Naive thymus-derived CD8-positive, alpha-beta T cell (primary cell): ENCODE measurements at regions of chr15 and their contacts with region 1.

Region 1: DNA sequence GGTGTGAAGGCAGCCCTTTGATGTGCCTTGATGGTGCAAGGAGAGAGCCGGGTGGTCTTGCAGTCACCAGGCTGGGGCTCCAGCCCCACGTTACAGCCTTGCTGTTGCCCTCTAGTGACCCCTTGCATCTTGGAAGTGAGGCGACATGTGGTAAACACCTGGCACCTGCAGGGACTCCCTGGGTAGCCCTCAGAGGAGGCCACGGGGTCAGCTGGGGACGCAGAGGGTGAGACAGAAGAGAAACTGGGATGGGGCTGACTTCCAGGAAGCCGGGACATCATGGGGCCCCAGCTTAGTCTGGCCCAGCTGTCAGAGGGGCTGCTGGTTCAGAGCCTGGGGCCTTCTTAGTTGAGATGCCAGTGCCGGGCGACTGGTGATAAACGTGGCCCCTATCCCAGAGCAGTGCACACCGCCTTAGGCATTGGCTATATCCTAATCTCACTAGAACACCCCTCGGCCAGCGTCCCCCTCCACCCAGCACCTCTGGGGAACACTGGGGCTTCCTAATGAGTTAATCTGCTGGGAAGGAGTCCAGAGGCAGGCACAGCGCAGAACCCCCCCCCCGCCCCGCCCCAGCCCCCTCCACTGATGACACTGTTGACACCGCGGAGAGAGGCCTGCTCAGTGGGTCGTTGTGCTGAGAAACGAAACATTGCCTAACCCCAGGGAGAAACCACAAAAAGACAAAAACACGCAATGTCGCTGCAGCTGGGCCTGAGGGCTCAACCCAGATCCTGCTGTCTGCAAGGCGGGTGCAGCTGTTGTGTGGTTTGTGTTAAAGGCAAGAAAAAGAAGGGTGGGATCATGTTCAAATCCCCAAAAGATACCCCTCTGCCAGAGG is 60.5 kb upstream of the KLF13 start:
- DNase-seq: peak; percentile 22 to 89 (median 74)
- ATAC-seq: peak; percentile 80 to 89
- H3K4me3 Mint-ChIP-seq: peak overlapping the region; percentile 62 to 85 (median 80)
- H3K27ac Mint-ChIP-seq: peak overlapping the region; percentile 93 to 100 (median 97)
- H3K4me1 Mint-ChIP-seq: peaks cover 56 to 98% (median 95%) of the 10 kb centered on the region in 4 donors
- H3K27me3 Mint-ChIP-seq: no peaks in the 10 kb centered on the region

Region 2: GRCh38 chr15:31215490-31216214 is 50.4 kb before region 1 on chr15:
- POLR2A ChIA-PET with region 1: interaction called, 59 read pairs
- DNase-seq: peak; percentile 52 to 84 (median 73)
- ATAC-seq: peak; percentile 72 to 78
- H3K4me3 Mint-ChIP-seq: peak overlapping the region; percentile 48 to 88 (median 68)
- H3K27ac Mint-ChIP-seq: peak overlapping the region in 9 of 10 donors; percentile 4 to 92 (median 85)
- H3K4me1 Mint-ChIP-seq: peaks cover 16 to 45% (median 35%) of the 10 kb centered on the region in 4 donors
- H3K27me3 Mint-ChIP-seq: no peaks in the 10 kb centered on the region

Region 3: GRCh38 chr15:31254431-31255175 is 11.5 kb before region 1 on chr15:
- POLR2A ChIA-PET with region 1: interaction called, 46 read pairs
- DNase-seq: no peak
- ATAC-seq: no peak
- H3K4me3 Mint-ChIP-seq: no peak overlapping the region
- H3K27ac Mint-ChIP-seq: peak overlapping the region in 2 of 10 donors; percentile 13 to 64
- H3K4me1 Mint-ChIP-seq: peaks cover 15 to 48% (median 31%) of the 10 kb centered on the region in 4 donors
- H3K27me3 Mint-ChIP-seq: no peaks in the 10 kb centered on the region

Region 4: GRCh38 chr15:31302778-31303725 is 37.0 kb after region 1 on chr15:
- POLR2A ChIA-PET with region 1: interaction called, 44 read pairs
- DNase-seq: peak in 3 of 10 donors; percentile 18 to 40 (median 37)
- ATAC-seq: peak; percentile 76
- H3K4me3 Mint-ChIP-seq: peak overlapping the region in 2 of 10 donors; percentile 24 to 27
- H3K27ac Mint-ChIP-seq: peak overlapping the region in 7 of 10 donors; percentile 29 to 81 (median 68)
- H3K4me1 Mint-ChIP-seq: peaks cover 19 to 46% (median 43%) of the 10 kb centered on the region in 4 donors
- H3K27me3 Mint-ChIP-seq: peaks cover 0 to 2% (median 0%) of the 10 kb centered on the region in 5 donors

Region 5: DNA sequence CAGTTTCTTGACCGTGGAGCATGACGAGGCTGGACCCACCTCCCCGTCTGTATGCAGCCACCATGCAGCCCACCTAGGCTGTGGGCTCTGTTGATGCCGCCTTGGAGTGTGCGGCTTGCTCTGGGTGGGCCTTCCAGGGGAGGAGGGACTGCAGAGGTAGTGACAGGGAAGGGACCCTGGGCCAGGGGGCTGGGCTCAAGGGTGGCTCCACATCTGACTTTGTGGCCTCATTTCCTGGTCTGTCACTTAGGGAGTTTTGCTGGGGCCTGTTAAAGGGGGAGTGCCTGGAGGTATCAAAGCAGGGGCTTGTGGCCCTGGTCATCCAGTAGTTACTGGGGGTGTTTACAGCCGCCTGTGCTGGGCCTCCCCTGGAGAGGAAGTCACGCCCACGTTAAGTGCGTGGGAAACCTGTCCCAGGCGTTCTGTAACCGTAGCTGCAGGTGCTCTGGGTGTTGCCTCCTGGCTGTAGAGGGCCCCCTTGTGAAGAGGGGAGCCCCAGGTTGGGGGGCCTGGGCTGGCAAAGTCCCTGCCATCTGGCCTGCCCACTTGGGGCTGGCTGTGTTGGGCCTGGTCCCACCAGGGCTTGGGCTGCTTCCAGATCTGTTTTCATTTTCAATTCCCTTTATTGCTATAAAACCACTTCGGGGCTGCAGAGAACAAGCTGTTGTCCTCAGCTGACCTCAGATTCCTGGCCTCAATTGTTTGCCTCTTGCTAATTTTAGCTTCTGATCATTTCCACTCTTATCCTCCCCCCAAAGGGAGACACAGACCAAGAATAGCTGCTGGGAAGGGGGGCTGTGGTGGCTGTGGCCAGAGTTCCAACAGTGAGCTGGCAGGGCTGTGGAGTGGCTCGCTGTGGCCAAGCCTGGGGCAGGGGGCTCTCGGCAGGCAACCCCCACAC is 87.1 kb after region 1 on chr15:
- POLR2A ChIA-PET with region 1: interaction called, 133 read pairs
- DNase-seq: peak in 8 of 10 donors; percentile 44 to 82 (median 74)
- ATAC-seq: peak; percentile 48 to 70
- H3K4me3 Mint-ChIP-seq: peak overlapping the region; percentile 71 to 94 (median 86)
- H3K27ac Mint-ChIP-seq: peak overlapping the region; percentile 96 to 100 (median 98)
- H3K4me1 Mint-ChIP-seq: peaks cover 65 to 100% (median 100%) of the 10 kb centered on the region in 4 donors
- H3K27me3 Mint-ChIP-seq: no peaks in the 10 kb centered on the region

Region 6: DNA sequence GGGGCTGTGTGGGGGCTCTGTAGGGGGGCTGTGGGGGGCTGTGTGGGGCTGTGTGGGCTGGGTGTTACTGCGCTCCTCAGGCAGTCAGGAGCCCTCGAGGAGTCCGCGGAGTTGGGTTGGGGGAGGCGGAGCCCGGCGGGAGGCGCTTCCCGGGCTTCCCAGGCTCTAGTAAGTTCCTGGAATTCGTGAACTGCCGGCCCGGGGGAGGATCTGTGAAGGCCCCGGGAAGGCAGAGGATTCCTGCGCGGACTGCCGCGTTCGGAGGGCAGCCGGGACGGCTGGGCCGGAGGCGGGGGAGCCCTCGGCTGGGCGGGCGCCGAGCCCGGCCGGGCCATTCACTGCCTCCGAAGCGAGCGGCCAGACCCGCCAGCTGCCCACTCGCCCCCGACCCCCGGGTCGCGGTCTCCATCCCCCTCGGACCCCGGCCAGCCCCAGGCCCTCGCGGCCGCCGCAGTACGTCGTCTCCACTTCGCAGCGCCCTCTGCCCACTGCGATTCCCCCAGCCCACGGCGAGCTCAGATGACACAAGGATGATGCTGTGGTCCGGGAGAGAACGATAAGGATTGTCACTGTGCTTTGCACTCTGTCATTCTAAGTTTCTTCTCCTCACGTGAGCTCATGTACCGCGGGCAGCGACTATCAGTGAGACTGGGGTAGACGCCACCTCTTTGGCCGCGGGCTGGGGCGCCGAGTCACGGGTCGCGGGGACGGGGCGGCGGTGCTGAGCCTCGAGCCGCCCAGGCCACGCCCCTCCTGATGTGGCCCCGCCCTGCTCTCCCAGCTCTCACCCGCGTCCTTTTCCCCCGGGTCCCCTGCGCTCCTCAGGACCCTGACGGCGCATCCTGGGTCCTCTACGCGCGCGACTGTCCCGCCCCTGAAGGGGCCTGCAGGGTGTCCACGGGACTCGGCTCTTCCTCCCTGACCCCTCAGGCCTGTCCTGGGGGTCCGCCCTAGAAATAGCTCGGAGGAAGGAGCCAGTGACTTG is 125.9 kb after region 1 on chr15:
- POLR2A ChIA-PET with region 1: interaction called, 21 read pairs
- DNase-seq: peak; percentile 69 to 88 (median 81)
- ATAC-seq: peak; percentile 74 to 83
- H3K4me3 Mint-ChIP-seq: peak overlapping the region; percentile 86 to 97 (median 95)
- H3K27ac Mint-ChIP-seq: peak overlapping the region; percentile 79 to 98 (median 97)
- H3K4me1 Mint-ChIP-seq: peaks cover 35 to 67% (median 57%) of the 10 kb centered on the region in 4 donors
- H3K27me3 Mint-ChIP-seq: no peaks in the 10 kb centered on the region